ENCODE measurements at regions of chr1 and their contacts with region 1.

Region 1: DNA sequence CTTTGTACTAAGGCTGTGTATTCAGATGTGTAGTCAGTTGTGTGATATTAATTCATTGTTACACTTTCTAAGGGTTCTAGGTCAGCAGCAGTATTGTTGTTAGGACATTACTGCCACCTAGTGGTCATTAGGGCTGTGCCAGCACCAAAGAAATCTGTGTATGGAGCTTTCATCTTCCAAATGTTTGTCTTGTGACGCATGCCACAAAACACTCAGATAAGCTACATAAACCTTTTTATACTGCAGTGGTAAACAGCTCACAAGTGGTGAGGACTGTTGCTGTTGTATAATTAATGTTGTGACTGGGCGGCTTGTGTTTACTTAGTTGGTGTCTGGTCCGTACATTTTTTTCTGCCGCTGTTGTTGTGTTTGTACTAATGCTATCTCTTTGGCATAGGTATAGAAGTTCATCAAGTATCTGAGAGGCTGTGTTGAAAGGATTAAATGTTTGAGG is 51.7 kb downstream of the S1PR1 start:
- DNase-seq: peak; percentile 71
- H3K4me3 Mint-ChIP-seq: no peak overlapping the region
- H3K27ac Mint-ChIP-seq: no peak overlapping the region
- H3K4me1 Mint-ChIP-seq: peaks cover 85% of the 10 kb centered on the region
- H3K27me3 Mint-ChIP-seq: no peaks in the 10 kb centered on the region

Region 2: GRCh38 chr1:100928128-100928527 is 360.4 kb before region 1 on chr1:
- CTCF ChIA-PET with region 1: interaction called, 70 read pairs
- POLR2A ChIA-PET with region 1: interaction called, 7 read pairs
- DNase-seq: no peak
- H3K4me3 Mint-ChIP-seq: no peak overlapping the region
- H3K27ac Mint-ChIP-seq: no peak overlapping the region
- H3K4me1 Mint-ChIP-seq: peaks cover 54% of the 10 kb centered on the region
- H3K27me3 Mint-ChIP-seq: no peaks in the 10 kb centered on the region

Region 3: DNA sequence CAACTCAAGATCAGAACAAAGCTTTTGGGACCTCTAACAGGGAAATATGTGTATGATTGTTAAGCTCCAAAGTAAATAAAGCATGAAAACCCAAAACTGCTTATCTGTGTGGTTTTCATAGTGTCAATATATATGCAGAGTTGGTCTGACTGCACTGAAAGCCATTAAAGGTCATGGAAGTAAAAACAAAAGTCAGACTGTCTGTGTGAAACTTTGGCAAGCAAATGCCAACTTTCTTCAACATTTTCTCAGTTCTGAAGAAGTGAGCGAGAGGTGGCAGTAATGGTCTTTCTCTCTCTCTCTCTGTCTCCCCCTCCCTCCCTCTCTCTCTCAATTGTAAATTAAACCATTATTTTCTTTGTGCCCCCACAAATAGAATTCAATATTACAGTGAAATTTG is 151.8 kb before region 1 on chr1:
- CTCF ChIA-PET with region 1: interaction called, 58 read pairs
- POLR2A ChIA-PET with region 1: interaction called, 8 read pairs
- DNase-seq: peak; percentile 26
- H3K4me3 Mint-ChIP-seq: no peak overlapping the region
- H3K27ac Mint-ChIP-seq: peak overlapping the region; percentile 64
- H3K4me1 Mint-ChIP-seq: peaks cover 58% of the 10 kb centered on the region
- H3K27me3 Mint-ChIP-seq: no peaks in the 10 kb centered on the region

Region 4: DNA sequence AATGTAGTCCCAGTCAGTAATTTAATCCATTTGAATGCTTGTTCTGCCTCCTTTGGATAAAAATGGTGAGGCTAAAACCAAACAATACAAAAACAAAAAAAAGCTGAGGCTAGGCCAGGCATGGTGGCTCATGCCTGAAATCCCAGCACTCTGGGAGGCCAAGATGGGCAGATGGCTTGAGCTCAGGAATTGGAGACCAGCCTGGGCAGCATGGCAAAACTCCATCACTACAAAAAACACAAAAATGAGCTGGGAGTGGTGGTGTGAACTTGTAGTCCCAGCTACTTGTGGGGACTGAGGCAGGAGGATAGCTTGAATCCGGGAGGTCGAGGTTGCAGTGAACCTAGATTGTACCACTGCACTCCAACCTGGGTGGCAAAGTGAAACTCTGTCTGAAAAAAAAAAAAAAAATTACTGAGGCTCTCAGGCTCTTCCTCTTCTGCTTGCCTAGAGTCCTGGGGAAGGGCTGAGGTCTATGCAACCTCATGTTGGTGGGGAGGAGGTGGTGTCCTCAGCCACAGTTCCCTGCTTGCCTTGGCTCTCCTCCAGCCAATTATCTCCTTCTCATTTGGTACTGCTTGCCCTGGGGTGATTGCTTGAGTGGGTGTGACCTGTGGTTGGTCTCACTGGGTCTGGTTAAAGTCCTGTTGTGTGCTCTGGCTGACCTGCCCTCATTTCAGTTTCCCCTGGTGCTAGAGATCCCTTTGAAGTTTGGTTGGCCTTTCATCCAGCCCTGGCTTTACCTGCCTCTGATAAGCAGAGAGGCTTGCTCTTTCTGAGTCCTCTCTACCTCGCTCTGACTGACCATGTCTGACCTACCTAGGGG is 30.8 kb before region 1 on chr1:
- CTCF ChIA-PET with region 1: interaction called, 26 read pairs
- POLR2A ChIA-PET with region 1: interaction called, 10 read pairs
- DNase-seq: peak; percentile 64
- H3K4me3 Mint-ChIP-seq: no peak overlapping the region
- H3K27ac Mint-ChIP-seq: peak overlapping the region; percentile 63
- H3K4me1 Mint-ChIP-seq: peaks cover 58% of the 10 kb centered on the region
- H3K27me3 Mint-ChIP-seq: no peaks in the 10 kb centered on the region

Region 5: DNA sequence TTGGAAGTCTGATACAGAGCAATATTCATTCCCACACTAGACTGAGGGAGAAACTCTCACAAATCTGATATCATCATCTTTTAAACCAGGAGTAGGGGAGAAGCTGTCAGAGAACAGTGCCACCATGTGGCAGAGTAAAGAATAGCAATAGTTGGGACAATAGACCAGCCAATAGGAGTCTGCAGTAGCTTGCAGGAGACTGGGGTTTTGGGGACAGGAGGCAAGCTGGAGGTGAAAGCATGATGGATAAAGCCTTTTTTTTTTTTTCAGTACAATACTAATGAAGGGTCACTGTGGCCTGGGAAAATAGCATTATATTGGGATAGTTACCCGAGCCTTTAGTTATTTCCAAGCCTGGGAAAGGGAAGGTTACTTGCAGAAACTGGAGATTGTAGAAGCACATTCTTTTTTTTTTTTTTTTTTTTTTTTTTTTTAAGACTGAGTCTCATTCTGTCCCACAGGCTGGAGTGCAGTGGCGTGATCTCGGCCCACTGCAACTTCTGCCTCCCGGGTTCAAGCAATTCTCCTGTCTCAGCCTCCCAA is 69.0 kb after region 1 on chr1:
- CTCF ChIA-PET with region 1: interaction called, 34 read pairs
- POLR2A ChIA-PET with region 1: interaction called, 4 read pairs
- DNase-seq: peak; percentile 70
- H3K4me3 Mint-ChIP-seq: no peak overlapping the region
- H3K27ac Mint-ChIP-seq: no peak overlapping the region
- H3K4me1 Mint-ChIP-seq: peaks cover 8% of the 10 kb centered on the region
- H3K27me3 Mint-ChIP-seq: peaks cover 18% of the 10 kb centered on the region

Region 6: GRCh38 chr1:101550581-101550980 is 262.1 kb after region 1 on chr1:
- CTCF ChIA-PET with region 1: no interaction called
- POLR2A ChIA-PET with region 1: no interaction called
- DNase-seq: no peak
- H3K4me3 Mint-ChIP-seq: no peak overlapping the region
- H3K27ac Mint-ChIP-seq: no peak overlapping the region
- H3K4me1 Mint-ChIP-seq: no peaks in the 10 kb centered on the region
- H3K27me3 Mint-ChIP-seq: no peaks in the 10 kb centered on the region

Measured in activated CD4-positive, alpha-beta memory T cell treated with anti-CD3 and anti-CD28 coated beads, Interleukin-2, amount 10 ng/mL, durations not matched to agents 7 days and 5 days (primary cell).